Esophagus muscularis mucosa (tissue), 4 donors: ENCODE measurements at regions of chr10 and their contacts with region 1.

Region 1: GRCh38 chr10:116385994-116386809 is 41.4 kb upstream of the PNLIPRP3 start:
- DNase-seq: no peak
- H3K4me3 ChIP-seq: no peak overlapping the region
- H3K27ac ChIP-seq: no peak overlapping the region
- H3K4me1 ChIP-seq: no peaks in the 10 kb centered on the region
- H3K27me3 ChIP-seq: no peaks in the 10 kb centered on the region
- CTCF ChIP-seq: peak; percentile 36 to 56 (median 51)
- EP300 ChIP-seq: no peak
- POLR2A ChIP-seq: no peak

Region 2: GRCh38 chr10:115171392-115171960 is 1214.7 kb before region 1 on chr10:
- intact Hi-C with region 1: loop called (anchors 10 kb)
- DNase-seq: no peak
- H3K4me3 ChIP-seq: no peak overlapping the region
- H3K27ac ChIP-seq: no peak overlapping the region
- H3K4me1 ChIP-seq: peaks cover 0 to 4% (median 0%) of the 10 kb centered on the region in 4 donors
- H3K27me3 ChIP-seq: no peaks in the 10 kb centered on the region
- CTCF ChIP-seq: peak; percentile 13 to 46 (median 39)
- EP300 ChIP-seq: no peak
- POLR2A ChIP-seq: no peak

Region 3: DNA sequence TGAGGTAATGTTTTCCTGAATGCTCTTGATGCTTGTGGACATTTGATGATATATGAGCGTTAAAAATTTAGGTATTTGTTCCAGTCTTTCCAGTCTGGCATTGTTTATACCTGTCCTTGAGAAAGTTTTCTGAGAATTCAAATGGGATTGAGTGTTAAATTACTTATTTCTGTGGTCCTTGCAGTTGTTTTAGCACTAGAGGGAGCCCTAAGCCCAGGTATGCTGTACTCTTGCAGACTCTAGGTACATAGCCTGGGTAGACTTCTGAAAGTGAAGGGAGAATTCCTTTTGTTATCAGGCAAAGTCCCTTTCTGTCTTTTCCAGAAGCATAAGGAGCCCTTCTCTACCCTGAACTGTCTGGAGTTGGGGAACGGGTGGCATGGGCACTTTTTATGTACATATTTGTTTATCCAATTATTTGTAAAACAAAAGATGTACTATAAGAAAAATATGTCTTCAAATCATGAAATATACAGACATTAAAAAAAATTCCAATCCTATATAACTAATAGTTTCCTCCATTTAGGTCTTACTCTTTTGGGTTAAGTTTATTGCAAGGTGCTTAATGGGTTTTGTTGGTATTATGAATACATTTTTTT is 1030.9 kb before region 1 on chr10:
- intact Hi-C with region 1: loop called (anchors 10 kb)
- DNase-seq: no peak
- H3K4me3 ChIP-seq: no peak overlapping the region
- H3K27ac ChIP-seq: no peak overlapping the region
- H3K4me1 ChIP-seq: no peaks in the 10 kb centered on the region
- H3K27me3 ChIP-seq: no peaks in the 10 kb centered on the region
- CTCF ChIP-seq: peak; percentile 28 to 45 (median 44)
- EP300 ChIP-seq: no peak
- POLR2A ChIP-seq: no peak

Region 4: GRCh38 chr10:115706026-115706781 is 680.0 kb before region 1 on chr10:
- intact Hi-C with region 1: loop called (anchors 5 kb)
- DNase-seq: no peak
- H3K4me3 ChIP-seq: no peak overlapping the region
- H3K27ac ChIP-seq: no peak overlapping the region
- H3K4me1 ChIP-seq: no peaks in the 10 kb centered on the region
- H3K27me3 ChIP-seq: no peaks in the 10 kb centered on the region
- CTCF ChIP-seq: peak in 2 of 3 experiments; percentile 41 to 44
- EP300 ChIP-seq: no peak
- POLR2A ChIP-seq: no peak